Heart right ventricle (tissue), 16 donors: ENCODE measurements at regions of chr14 and their contacts with region 1.

Region 1: GRCh38 chr14:61188978-61189808 is 91.9 kb downstream of the TMEM30B start:
- DNase-seq: peak; percentile 34 to 57
- ATAC-seq: peak; percentile 80 to 90 (median 84)
- H3K4me3 ChIP-seq: peak overlapping the region in 9 of 10 donors; percentile 22 to 55 (median 48)
- H3K27ac ChIP-seq: peak overlapping the region in 9 of 10 donors; percentile 8 to 78 (median 52)
- H3K4me1 ChIP-seq: peaks cover 0 to 23% (median 0%) of the 10 kb centered on the region in 9 donors
- H3K27me3 ChIP-seq: peaks cover 0 to 68% (median 23%) of the 10 kb centered on the region in 7 donors
- CTCF ChIP-seq: peak in 8 of 9 donors; percentile 17 to 65 (median 53)

Region 2: DNA sequence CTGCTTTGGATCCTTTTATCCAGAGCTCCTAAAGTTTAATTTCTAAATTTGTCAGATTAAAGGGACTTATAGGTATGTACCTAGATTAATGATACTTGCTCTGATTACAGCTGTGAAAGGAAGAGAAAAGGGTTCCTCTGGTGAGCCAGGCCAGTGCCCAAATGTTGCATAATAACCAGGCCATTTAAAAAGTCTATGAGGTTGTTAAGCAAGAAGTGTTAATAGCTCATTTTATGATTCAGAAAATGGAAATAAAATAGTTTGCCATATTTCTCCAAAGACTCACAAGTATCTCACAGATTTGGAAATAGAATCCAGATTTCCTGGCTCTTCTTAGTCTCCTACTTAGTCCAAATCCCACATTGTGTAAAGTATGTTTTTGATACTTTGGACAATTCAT is 140.6 kb before region 1 on chr14:
- intact Hi-C with region 1: loop called in 1 of 10 experiments (anchors 10 kb)
- DNase-seq: no peak
- ATAC-seq: no peak
- H3K4me3 ChIP-seq: no peak overlapping the region
- H3K27ac ChIP-seq: no peak overlapping the region
- H3K4me1 ChIP-seq: peaks cover 0 to 6% (median 0%) of the 10 kb centered on the region in 9 donors
- H3K27me3 ChIP-seq: no peaks in the 10 kb centered on the region
- CTCF ChIP-seq: no peak

Region 3: GRCh38 chr14:61111209-61111665 is 78.0 kb before region 1 on chr14:
- intact Hi-C with region 1: loop called in 1 of 10 experiments (anchors 5 kb)
- DNase-seq: no peak
- ATAC-seq: no peak
- H3K4me3 ChIP-seq: no peak overlapping the region
- H3K27ac ChIP-seq: peak overlapping the region in 3 of 10 donors; percentile 3 to 48 (median 25)
- H3K4me1 ChIP-seq: peaks cover 0 to 45% (median 16%) of the 10 kb centered on the region in 9 donors
- H3K27me3 ChIP-seq: peaks cover 0 to 15% (median 0%) of the 10 kb centered on the region in 7 donors
- CTCF ChIP-seq: no peak

Region 4: GRCh38 chr14:61379639-61380184 is 190.5 kb after region 1 on chr14:
- intact Hi-C with region 1: no loop called
- DNase-seq: no peak
- ATAC-seq: no peak
- H3K4me3 ChIP-seq: no peak overlapping the region
- H3K27ac ChIP-seq: no peak overlapping the region
- H3K4me1 ChIP-seq: peaks cover 0 to 35% (median 9%) of the 10 kb centered on the region in 9 donors
- H3K27me3 ChIP-seq: no peaks in the 10 kb centered on the region
- CTCF ChIP-seq: no peak